ENCODE measurements at regions of chr18 and their contacts with region 1.

Region 1: GRCh38 chr18:48590678-48591077 is 51.8 kb downstream of the CTIF start:
- DNase-seq: no peak
- H3K4me3 ChIP-seq: no peak overlapping the region
- H3K27ac ChIP-seq: peak overlapping the region; percentile 67 to 79 (median 72)
- H3K4me1 ChIP-seq: peaks cover 0 to 48% (median 40%) of the 10 kb centered on the region in 4 donors
- H3K27me3 ChIP-seq: no peaks in the 10 kb centered on the region
- CTCF ChIP-seq: no peak
- EP300 ChIP-seq: no peak
- POLR2A ChIP-seq: no peak

Region 2: GRCh38 chr18:48545757-48546321 is 44.8 kb before region 1 on chr18:
- intact Hi-C with region 1: loop called (anchors 5 kb)
- DNase-seq: peak; percentile 90
- H3K4me3 ChIP-seq: no peak overlapping the region
- H3K27ac ChIP-seq: peak overlapping the region; percentile 77 to 98 (median 89)
- H3K4me1 ChIP-seq: peaks cover 0 to 91% (median 79%) of the 10 kb centered on the region in 4 donors
- H3K27me3 ChIP-seq: no peaks in the 10 kb centered on the region
- CTCF ChIP-seq: no peak
- EP300 ChIP-seq: no peak
- POLR2A ChIP-seq: no peak

Region 3: DNA sequence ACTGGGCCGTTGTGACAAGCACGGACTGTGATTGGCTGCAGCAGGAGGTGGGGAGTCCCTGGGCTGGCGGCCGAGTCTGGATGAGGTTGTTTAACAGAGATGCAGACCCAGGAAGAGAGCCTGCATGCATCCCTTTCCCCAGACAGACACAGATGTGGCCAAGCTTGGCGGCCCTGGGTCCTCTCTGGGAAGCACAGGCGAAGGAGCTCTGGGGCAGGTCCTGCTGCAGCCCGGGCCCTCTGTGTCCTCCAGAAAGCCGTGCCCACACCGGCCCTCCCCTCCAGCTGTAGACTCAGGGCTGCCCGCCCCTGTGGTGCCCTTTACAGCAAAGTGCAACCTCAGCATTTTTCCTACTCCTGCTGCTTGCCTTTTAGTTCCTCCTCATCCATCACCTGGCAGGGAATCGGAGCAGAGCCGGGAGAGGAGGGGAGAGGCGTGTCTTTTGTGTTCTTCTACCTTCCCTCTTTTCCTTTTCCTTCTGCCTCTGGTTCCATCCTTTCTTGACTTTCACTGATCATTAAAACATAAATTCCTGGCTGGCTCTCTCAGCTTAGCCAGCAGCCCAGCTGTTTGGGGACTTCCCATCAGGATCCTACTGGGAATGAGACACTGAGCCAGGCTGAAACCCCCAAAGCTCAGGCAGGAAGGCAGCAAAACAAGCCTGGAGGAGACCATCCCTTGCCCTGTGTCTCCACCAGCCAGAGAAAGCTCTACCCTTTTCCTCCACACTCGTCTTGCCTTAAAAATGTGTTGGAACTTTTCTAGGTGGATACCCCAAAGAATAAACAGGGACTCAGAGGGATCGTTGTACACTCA is 23.1 kb after region 1 on chr18:
- intact Hi-C with region 1: no loop called
- DNase-seq: peak; percentile 93
- H3K4me3 ChIP-seq: no peak overlapping the region
- H3K27ac ChIP-seq: peak overlapping the region; percentile 36 to 69 (median 66)
- H3K4me1 ChIP-seq: peaks cover 0 to 55% (median 34%) of the 10 kb centered on the region in 4 donors
- H3K27me3 ChIP-seq: no peaks in the 10 kb centered on the region
- CTCF ChIP-seq: no peak
- EP300 ChIP-seq: no peak
- POLR2A ChIP-seq: no peak

Region 4: DNA sequence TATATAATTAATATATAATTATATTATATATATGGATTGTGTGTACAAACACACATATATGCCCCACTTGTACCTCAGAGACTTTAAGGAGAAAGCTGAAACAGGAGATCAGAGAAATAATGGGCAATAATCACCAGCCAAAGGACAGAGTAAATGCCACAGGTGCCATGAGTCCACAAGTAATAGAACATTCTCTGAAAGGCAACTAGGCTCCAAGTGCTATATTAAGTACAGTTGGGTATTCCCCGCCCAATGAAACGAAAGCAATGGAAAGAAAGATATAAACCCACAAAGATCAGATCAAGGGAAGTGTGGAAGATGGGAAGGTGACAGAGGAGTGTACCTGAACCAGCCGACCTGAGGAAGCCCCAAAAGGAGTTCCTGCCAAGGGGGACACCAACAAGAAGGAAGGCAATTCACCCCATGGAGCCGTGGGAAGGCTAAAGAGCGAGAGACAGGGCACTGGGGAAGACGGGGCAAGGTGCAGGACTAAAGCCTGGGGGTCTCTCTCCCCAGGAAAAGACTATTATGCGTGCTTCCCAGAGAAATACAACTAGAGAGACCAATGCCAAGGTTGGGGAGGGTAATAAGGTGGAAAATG is 850.8 kb after region 1 on chr18:
- intact Hi-C with region 1: no loop called
- DNase-seq: no peak
- H3K4me3 ChIP-seq: no peak overlapping the region
- H3K27ac ChIP-seq: no peak overlapping the region
- H3K4me1 ChIP-seq: peaks cover 0 to 35% (median 18%) of the 10 kb centered on the region in 4 donors
- H3K27me3 ChIP-seq: no peaks in the 10 kb centered on the region
- CTCF ChIP-seq: no peak
- EP300 ChIP-seq: no peak
- POLR2A ChIP-seq: no peak

Measured in sigmoid colon (tissue), 7 donors.